Activated CD8-positive, alpha-beta T cell treated with anti-CD3 and anti-CD28 coated beads for 36 hours (primary cell): ENCODE measurements at regions of chr12 and their contacts with region 1.

Region 1: DNA sequence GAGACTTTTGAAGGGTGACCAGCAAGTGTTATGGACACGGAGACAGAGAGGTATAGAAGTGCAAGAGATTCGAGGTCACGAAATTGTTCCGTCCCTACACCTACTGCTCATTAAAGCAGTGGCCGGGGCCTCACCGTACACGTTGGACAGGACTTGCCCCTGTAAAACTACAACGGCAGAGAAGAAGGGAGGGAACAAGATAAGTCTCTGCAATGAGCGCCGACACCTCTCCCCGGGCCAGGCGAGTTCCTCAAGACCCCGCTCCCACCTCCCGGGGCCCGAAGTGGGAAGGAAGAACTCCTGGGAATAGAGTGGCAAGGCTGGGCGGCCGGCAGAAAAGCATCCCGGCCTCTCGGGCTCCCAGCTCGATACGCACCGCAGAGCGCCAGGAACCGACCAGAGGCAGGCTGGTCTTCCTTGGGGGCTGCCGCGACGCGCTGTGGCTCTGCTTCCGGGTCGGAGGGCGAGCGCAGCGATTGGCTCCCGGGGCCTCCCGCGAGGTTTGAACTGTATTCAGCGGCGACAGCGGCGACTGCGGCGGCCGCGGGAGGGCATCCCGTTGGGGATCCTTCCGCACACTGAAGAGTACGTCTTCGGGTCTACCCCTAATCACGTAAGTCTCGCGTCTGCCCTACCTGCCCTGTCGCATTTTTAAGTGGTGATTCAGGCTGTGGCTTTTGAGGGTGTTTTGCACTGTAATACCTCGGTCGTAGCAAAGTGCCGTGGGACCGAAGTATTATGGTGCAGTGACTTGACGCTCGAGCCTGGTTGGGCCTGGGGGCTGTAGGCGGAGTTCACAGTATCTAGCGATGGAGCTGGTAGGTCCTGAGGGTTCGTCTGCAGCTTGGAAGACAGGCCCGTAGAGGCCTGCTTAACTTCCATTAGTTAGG is at the starts of genes NUP37 and PARPBP:
- DNase-seq: peak; percentile 94
- ATAC-seq: peak; percentile 95
- H3K4me3 Mint-ChIP-seq: peak within 1 kb of the TSS; percentile 97
- H3K27ac Mint-ChIP-seq: peak within 1 kb of the TSS; percentile 93
- H3K4me1 Mint-ChIP-seq: peaks cover 19% of the 10 kb centered on the region
- H3K27me3 Mint-ChIP-seq: no peaks in the 10 kb centered on the region
- CTCF ChIP-seq: no peak
- total RNA-seq, gene NUP37: 99.1 to 104 TPM
- total RNA-seq, gene PARPBP: 26.1 to 26.2 TPM

Region 2: DNA sequence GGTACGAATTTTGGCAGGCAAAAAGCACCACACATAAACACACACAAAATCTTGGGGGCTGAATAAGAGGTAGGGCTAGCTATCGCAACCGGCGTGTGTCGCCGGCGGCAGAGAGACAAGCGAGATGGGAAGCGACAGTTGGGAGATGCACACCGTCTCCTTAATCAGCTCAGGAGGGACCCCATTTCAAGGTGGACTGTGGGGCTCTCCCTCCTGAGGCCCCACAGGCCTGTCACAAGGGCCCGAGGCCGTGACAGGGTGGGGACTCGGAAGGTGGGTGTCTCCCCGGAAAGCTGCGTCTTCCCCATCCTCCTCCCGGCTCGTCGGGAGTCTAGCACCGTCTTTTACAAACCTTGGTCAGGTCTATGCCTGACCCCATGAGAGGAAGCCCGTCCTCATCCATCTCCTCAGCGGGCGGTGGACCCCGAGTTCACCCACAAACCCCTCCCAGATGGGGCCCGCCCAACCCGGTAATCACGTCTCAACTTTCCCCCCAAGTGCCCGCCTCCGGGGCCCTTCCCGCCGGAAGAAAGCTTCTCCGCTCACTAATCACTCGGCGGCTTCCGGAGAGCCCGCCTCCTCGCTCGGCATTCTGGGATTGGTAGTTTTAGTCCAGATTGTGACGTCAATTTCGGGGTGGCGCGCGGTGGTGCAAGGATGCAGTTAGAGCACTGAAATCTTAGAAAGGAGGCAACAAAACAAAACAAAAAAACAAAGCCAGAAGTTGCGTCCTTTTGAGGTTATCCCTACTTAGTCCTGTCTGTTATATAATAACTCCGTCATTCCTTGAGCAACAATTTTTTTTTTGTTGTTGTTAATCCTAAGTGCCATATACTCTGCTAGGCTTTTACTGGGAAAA is 58.1 kb before region 1 on chr12 and contains the start of gene WASHC3:
- CTCF ChIA-PET with region 1: interaction called, 4 read pairs
- POLR2A ChIA-PET with region 1: no interaction called
- intact Hi-C with region 1: loop called (anchors 1 kb)
- DNase-seq: peak; percentile 99
- ATAC-seq: peak; percentile 92
- H3K4me3 Mint-ChIP-seq: peak within 1 kb of the TSS; percentile 88
- H3K27ac Mint-ChIP-seq: peak within 1 kb of the TSS; percentile 97
- H3K4me1 Mint-ChIP-seq: peaks cover 34% of the 10 kb centered on the region
- H3K27me3 Mint-ChIP-seq: peaks cover 2% of the 10 kb centered on the region
- CTCF ChIP-seq: no peak
- total RNA-seq, gene WASHC3: 30.7 to 32.3 TPM

Region 3: GRCh38 chr12:102468261-102468915 is 348.5 kb after region 1 on chr12:
- CTCF ChIA-PET with region 1: no interaction called
- POLR2A ChIA-PET with region 1: no interaction called
- intact Hi-C with region 1: no loop called
- DNase-seq: no peak
- ATAC-seq: no peak
- H3K4me3 Mint-ChIP-seq: no peak overlapping the region
- H3K27ac Mint-ChIP-seq: no peak overlapping the region
- H3K4me1 Mint-ChIP-seq: peaks cover 7% of the 10 kb centered on the region
- H3K27me3 Mint-ChIP-seq: peaks cover 14% of the 10 kb centered on the region
- CTCF ChIP-seq: no peak